ENCODE measurements at regions of chr9 and their contacts with region 1.

Region 1: GRCh38 chr9:106019039-106019656 is 324.8 kb downstream of the TMEM38B start:
- DNase-seq: peak; percentile 30
- ATAC-seq: peak; percentile 95

Region 2: GRCh38 chr9:106075960-106076327 is 56.8 kb after region 1 on chr9:
- intact Hi-C with region 1: no loop called
- DNase-seq: no peak
- ATAC-seq: no peak

Region 3: DNA sequence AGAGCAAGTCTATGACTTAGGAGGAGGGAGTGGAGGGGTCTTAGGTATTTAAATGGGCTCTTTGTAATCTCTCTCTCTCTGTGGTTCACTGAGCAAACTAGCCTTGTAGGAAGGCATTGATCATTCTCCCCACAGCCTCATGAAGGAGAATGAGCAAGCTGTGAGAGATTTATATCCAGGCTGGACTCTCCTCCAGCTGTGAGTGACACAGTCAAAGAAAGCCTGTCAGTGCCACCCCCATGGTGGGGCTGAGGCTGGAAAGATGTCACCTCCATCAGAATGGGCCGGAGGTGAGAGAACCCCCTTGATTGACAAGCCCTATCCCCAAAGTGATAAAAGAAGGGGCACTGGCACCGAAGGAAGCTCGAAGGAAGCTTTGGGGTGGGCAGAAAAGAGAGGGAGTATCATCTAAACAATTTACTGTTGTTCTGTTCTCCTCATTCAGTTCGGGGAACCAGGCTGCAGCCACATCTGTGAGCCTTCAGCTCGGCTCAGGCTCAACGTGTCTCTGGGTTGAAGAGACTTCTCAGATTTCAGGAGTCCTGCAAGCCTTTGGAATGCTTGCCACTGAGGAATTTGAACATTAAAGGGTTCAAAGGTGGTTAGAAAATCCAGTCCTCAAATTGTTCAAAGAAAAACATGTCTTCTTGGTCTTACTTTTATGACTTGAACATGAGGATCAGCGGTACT is 305.6 kb after region 1 on chr9:
- intact Hi-C with region 1: no loop called
- DNase-seq: no peak
- ATAC-seq: no peak

Region 4: DNA sequence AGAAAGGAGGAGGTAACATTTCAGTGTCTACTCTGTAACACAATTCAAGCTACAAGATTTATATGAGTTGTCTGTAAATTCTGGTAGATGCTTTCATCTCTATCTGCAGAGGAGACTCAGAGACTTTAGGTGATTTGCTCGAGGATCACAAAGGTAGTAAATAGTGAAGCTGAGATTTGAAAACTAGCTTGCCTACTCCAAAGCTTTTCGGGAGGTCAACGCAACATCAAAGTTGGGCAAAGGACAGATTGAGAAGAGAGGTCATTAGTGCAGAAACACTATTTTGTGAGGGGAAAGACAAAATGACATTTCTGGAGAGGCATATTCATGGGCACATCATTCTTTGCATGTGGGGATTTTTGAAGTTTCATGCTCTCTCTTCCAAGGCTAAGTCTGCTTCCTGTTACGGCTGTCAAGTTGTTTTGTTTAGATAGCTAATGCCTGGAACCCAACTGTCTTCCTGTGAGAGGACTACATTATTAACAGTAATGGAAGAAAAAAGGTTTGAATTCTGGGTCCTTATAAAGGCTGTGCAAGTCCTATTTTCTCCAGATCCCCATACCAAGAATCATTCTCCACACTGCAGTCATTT is 430.3 kb after region 1 on chr9:
- intact Hi-C with region 1: loop called (anchors 5 kb)
- DNase-seq: no peak
- ATAC-seq: no peak

Measured in left ventricle myocardium superior (tissue), 1 donor.